AG04450 (cell line): ENCODE measurements at regions of chrX and their contacts with region 1.

Region 1: GRCh38 chrX:101062176-101062575 is 10.3 kb upstream of the TRMT2B start:
- DNase-seq: no peak
- H3K4me3 ChIP-seq: no peak overlapping the region
- H3K27ac ChIP-seq: no peak overlapping the region
- H3K27me3 ChIP-seq: no peaks in the 10 kb centered on the region
- CTCF ChIP-seq: no peak

Region 2: DNA sequence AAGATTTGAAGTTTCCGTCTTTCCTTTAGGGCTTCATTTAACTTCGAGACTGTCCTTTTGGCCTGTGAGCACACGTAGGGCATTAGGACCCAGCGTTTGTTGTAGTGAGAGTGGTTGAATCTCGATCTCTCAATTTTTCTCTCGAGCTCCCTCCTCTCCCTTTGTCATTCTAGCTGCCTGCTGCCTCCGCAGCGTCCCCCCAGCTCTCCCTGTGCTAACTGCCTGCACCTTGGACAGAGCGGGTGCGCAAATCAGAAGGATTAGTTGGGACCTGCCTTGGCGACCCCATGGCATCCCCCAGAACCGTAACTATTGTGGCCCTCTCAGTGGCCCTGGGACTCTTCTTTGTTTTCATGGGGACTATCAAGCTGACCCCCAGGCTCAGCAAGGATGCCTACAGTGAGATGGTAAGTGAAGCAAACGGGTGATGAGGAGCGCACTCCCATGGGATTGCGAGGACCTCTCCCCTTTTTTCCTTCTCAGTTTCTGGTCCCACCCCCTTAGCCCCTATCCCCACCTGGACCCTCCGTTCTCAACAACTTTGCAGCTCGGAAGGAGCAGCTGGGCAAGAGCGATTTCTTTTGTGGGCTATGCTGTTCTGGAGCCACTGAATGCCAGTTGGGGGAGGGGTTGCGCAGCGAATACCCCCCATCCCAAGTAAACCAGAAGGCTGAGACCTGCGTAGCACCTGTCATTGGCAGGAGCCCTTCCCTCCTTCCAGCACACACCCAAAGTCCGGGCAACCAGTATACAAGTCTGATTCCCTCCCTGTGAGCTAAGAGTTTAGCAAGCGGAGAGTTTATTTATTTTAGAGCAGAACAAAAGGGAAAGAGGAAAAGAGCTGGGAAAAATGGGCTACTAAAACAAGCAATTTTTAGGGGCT is 16.8 kb after region 1 on chrX and contains the start of gene TMEM35A:
- CTCF ChIA-PET with region 1: no interaction called
- POLR2A ChIA-PET with region 1: interaction called, 10 read pairs
- DNase-seq: peak; percentile 7
- H3K4me3 ChIP-seq: peak within 1 kb of the TSS; percentile 73
- H3K27ac ChIP-seq: no peak within 1 kb of the TSS
- H3K27me3 ChIP-seq: no peaks in the 10 kb centered on the region
- CTCF ChIP-seq: no peak
- polyA plus RNA-seq, gene TMEM35A: 54.9 and 58.6 TPM in 2 replicates